Endothelial cell of umbilical vein (primary cell): ENCODE measurements at regions of chr6 and their contacts with region 1.

Region 1: GRCh38 chr6:3068329-3069214 is at the start of gene RIPK1:
- DNase-seq: peak; percentile 82
- H3K4me3 ChIP-seq: peak within 1 kb of the TSS; percentile 66 to 92 (median 78)
- H3K27ac ChIP-seq: peak within 1 kb of the TSS; percentile 73
- H3K4me1 ChIP-seq: peaks cover 9% of the 10 kb centered on the region
- H3K27me3 ChIP-seq: peaks cover 0 to 7% of the 10 kb centered on the region in 2 experiments
- CTCF ChIP-seq: peak in 1 of 2 donors; percentile 14
- POLR2A ChIP-seq: peak; percentile 78
- total RNA-seq, gene RIPK1: 20.2 and 20.6 TPM in 2 replicates

Region 2: GRCh38 chr6:3118353-3119039 is 49.9 kb after region 1 on chr6 and contains the start of gene BPHL:
- CTCF ChIA-PET with region 1: interaction called, 3 read pairs
- POLR2A ChIA-PET with region 1: no interaction called
- dilution Hi-C with region 1: no loop called
- intact Hi-C with region 1: loop called (anchors 1 kb)
- DNase-seq: peak; percentile 94
- H3K4me3 ChIP-seq: peak within 1 kb of the TSS; percentile 54 to 98 (median 74)
- H3K27ac ChIP-seq: peak within 1 kb of the TSS; percentile 88
- H3K4me1 ChIP-seq: peaks cover 10% of the 10 kb centered on the region
- H3K27me3 ChIP-seq: no peaks in the 10 kb centered on the region
- CTCF ChIP-seq: no peak
- POLR2A ChIP-seq: peak; percentile 69
- total RNA-seq, gene BPHL: 14.8 and 16.6 TPM in 2 replicates

Region 3: DNA sequence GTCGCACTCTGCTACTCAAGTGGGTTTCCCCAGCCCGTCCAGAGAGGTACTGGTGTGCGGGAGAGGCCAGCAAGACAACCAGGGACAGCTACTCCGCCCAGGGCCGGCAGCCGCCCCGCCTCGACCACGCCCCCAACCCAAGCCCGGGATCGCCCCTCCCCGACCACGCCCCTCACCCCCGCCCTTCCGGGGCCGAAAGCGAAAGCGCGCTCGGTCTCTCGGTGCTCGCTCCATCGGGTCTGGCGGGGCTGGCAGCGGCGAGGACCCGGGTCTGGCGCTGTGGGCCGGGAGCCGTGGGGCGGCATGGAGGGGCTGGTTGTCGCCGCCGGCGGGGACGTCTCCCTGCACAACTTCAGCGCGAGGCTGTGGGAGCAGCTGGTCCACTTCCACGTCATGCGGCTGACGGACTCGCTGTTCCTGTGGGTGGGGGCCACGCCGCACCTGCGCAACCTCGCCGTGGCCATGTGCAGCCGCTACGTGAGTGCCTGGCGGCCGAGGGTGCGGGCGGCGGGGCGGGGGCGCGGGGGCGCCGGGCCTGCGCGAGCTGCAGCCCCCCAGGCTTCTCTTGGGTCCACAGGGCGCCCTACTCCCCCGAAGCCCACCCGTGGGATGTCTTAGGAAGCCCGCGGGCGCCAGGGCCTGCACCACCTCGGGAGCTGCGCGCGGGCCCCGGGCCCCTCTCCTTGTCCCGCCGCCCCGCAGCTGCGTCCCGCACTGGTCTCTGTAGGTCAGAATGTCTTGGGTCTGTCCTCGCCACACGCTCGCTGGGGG is 190.3 kb after region 1 on chr6 and contains the start of gene PSMG4:
- CTCF ChIA-PET with region 1: no interaction called
- POLR2A ChIA-PET with region 1: no interaction called
- dilution Hi-C with region 1: no loop called
- intact Hi-C with region 1: loop called (anchors 2 kb)
- DNase-seq: peak; percentile 84
- H3K4me3 ChIP-seq: peak within 1 kb of the TSS; percentile 36 to 98 (median 41)
- H3K27ac ChIP-seq: peak within 1 kb of the TSS; percentile 10
- H3K4me1 ChIP-seq: peaks cover 7% of the 10 kb centered on the region
- H3K27me3 ChIP-seq: peaks cover 4 to 5% of the 10 kb centered on the region in 2 experiments
- CTCF ChIP-seq: no peak
- POLR2A ChIP-seq: peak; percentile 81
- total RNA-seq, gene PSMG4: 31.1 and 31.4 TPM in 2 replicates

Region 4: DNA sequence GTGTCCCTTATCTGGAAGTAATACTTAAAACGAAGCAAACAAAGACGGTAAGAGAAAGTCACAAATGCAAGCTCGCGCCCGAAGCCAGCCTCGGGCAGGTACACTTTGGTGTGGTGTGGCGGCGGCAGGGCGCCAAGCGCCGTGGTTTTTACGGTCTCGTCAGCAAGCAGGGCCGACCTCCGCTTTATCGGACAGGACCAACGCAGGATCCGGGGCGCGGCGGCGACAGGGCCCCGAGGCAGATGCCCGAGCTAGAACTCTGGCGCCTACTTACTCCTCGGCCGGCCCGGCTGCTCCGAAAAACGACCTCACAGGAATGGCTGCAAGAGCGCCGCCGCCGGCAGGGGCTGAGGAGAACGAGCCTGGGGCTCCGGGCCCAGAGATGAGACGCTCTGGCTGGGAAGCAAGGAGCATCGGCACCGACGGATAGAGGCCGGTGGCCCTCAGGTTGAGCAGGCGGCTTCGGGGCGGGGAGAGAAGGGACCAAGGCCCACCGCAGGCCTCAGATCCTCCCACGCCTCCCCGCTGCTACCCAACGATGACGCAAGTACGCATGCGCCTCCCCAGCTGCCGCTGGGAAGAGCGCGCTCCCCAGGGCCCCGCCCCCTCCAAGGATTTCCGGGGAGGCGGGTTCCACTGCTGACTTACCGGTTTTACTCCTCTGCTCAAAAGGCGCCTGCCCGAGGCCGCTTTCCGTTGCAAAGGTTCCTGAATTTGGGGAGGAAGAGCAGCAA is 949.8 kb after region 1 on chr6:
- CTCF ChIA-PET with region 1: no interaction called
- POLR2A ChIA-PET with region 1: no interaction called
- dilution Hi-C with region 1: no loop called
- intact Hi-C with region 1: loop called (anchors 5 kb)
- DNase-seq: peak; percentile 94
- H3K4me3 ChIP-seq: peak overlapping the region; percentile 50 to 92 (median 85)
- H3K27ac ChIP-seq: peak overlapping the region; percentile 93
- H3K4me1 ChIP-seq: peaks cover 29% of the 10 kb centered on the region
- H3K27me3 ChIP-seq: no peaks in the 10 kb centered on the region
- CTCF ChIP-seq: peak; percentile 25 to 52
- POLR2A ChIP-seq: peak; percentile 84